ENCODE measurements at regions of chr12 and their contacts with region 1.

Region 1: DNA sequence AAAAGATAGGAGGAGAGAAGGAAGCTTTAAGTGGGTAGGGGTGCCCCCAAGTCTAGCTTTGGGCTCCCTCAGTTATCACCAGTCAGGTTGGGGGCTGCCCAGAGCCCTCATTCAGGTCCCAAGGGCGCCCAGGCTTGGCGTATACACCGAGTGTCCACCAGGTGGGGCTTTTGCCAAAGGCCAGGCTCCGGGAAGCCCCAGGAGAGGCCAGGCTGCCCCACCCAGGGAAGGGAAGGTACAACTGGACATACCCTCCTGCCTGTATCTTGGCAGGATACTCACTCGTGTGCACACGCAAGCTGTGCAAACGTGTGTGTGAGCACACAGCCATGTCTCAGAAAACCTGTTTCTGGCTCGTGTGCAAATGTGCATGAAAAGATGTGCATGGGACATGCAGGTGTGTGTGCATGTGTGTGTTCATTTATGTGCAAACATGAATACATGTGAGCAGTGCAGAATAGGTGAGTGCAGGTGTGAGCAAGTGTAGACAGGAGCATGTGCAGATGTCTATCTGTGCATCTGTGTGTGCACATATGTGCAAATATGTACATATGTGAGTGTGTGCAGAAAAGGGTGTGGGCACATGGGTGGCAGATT is 103.9 kb upstream of the MYL2 start:
- DNase-seq: peak; percentile 72
- ATAC-seq: peak; percentile 83
- H3K4me3 Mint-ChIP-seq: no peak overlapping the region
- H3K27ac Mint-ChIP-seq: no peak overlapping the region
- H3K4me1 Mint-ChIP-seq: no peaks in the 10 kb centered on the region
- H3K27me3 Mint-ChIP-seq: peaks cover 14% of the 10 kb centered on the region

Region 2: DNA sequence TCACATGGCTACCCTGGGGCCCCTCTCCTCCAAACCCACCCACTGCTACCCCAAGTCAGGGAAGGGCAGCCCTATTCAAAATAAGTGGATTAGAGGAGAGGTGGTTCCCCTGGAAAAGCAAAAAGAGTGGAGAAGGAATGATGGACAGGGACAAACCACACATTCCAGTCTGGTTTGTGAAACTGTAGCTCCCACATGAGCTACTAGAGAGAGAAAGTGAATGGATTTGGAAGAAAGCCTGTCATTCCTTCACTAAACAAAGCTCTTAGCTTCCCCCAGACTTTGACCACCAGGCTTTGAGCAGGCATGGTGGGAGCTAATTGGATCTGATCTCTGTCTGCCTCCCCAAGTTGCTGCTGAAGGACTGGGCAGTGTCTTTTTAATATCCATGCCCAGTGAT is 149.5 kb before region 1 on chr12:
- CTCF ChIA-PET with region 1: no interaction called
- POLR2A ChIA-PET with region 1: no interaction called
- intact Hi-C with region 1: no loop called
- DNase-seq: no peak
- ATAC-seq: no peak
- H3K4me3 Mint-ChIP-seq: no peak overlapping the region
- H3K27ac Mint-ChIP-seq: no peak overlapping the region
- H3K4me1 Mint-ChIP-seq: no peaks in the 10 kb centered on the region
- H3K27me3 Mint-ChIP-seq: peaks cover 4% of the 10 kb centered on the region

Region 3: DNA sequence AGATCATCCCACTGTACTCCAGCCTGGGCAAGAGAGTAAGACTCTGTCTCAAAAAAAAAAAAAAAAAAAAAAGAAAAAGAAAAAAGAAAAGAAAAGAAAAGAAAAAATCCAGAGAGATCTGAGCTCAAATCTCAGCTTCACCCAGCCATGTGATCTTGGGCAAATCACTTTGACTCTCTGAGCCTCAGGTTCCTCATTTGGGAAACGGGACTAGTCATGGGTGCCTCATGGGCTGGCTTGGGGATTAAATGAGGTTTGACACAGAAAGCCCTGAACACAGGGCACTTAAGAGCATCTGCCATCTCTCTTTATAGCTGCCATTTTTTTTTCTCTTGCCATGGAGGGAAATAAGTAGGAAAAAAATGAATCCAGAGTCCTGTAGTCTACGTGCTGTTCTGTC is 17.7 kb before region 1 on chr12:
- CTCF ChIA-PET with region 1: no interaction called
- POLR2A ChIA-PET with region 1: no interaction called
- intact Hi-C with region 1: no loop called
- DNase-seq: no peak
- ATAC-seq: no peak
- H3K4me3 Mint-ChIP-seq: no peak overlapping the region
- H3K27ac Mint-ChIP-seq: no peak overlapping the region
- H3K4me1 Mint-ChIP-seq: no peaks in the 10 kb centered on the region
- H3K27me3 Mint-ChIP-seq: peaks cover 27% of the 10 kb centered on the region

Region 4: GRCh38 chr12:111174251-111174960 is 150.1 kb after region 1 on chr12:
- CTCF ChIA-PET with region 1: no interaction called
- POLR2A ChIA-PET with region 1: no interaction called
- intact Hi-C with region 1: loop called (anchors 1 to 5 kb)
- DNase-seq: peak; percentile 9
- ATAC-seq: no peak
- H3K4me3 Mint-ChIP-seq: no peak overlapping the region
- H3K27ac Mint-ChIP-seq: no peak overlapping the region
- H3K4me1 Mint-ChIP-seq: no peaks in the 10 kb centered on the region
- H3K27me3 Mint-ChIP-seq: peaks cover 12% of the 10 kb centered on the region

Region 5: DNA sequence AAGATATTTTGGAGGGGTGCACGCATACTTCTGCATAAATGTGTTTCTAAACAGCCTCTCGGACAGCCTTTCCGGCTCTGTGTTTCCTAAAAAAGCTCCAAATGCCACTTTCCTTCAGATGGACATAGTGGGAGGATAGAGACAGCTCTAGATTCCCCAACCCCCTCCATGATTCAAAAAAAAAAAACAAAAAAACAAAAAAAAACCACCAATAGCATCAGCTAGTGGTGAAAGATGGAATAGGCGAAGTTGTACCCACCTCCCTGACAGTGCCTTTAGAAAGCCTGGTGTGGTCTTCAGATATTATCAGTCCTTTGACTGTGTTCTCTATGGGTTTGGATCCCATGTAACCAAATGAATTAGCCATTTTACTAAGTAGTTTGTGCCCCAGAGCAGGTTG is 250.5 kb after region 1 on chr12:
- CTCF ChIA-PET with region 1: interaction called, 3 read pairs
- POLR2A ChIA-PET with region 1: no interaction called
- intact Hi-C with region 1: loop called (anchors 5 to 10 kb)
- DNase-seq: no peak
- ATAC-seq: no peak
- H3K4me3 Mint-ChIP-seq: no peak overlapping the region
- H3K27ac Mint-ChIP-seq: no peak overlapping the region
- H3K4me1 Mint-ChIP-seq: no peaks in the 10 kb centered on the region
- H3K27me3 Mint-ChIP-seq: peaks cover 8% of the 10 kb centered on the region

Region 6: GRCh38 chr12:111298582-111299436 is 274.5 kb after region 1 on chr12:
- CTCF ChIA-PET with region 1: interaction called, 4 read pairs
- POLR2A ChIA-PET with region 1: no interaction called
- intact Hi-C with region 1: loop called in 1 of 2 experiments (anchors 1 kb)
- DNase-seq: peak; percentile 76
- ATAC-seq: peak; percentile 60
- H3K4me3 Mint-ChIP-seq: no peak overlapping the region
- H3K27ac Mint-ChIP-seq: no peak overlapping the region
- H3K4me1 Mint-ChIP-seq: no peaks in the 10 kb centered on the region
- H3K27me3 Mint-ChIP-seq: no peaks in the 10 kb centered on the region

Region 7: GRCh38 chr12:111313833-111314259 is 289.5 kb after region 1 on chr12:
- CTCF ChIA-PET with region 1: interaction called, 3 read pairs
- POLR2A ChIA-PET with region 1: no interaction called
- intact Hi-C with region 1: loop called (anchors 1 kb)
- DNase-seq: peak; percentile 85
- ATAC-seq: peak; percentile 77
- H3K4me3 Mint-ChIP-seq: no peak overlapping the region
- H3K27ac Mint-ChIP-seq: no peak overlapping the region
- H3K4me1 Mint-ChIP-seq: peaks cover 9% of the 10 kb centered on the region
- H3K27me3 Mint-ChIP-seq: peaks cover 4% of the 10 kb centered on the region

Measured in activated CD4-positive, alpha-beta T cell treated with anti-CD3 and anti-CD28 coated beads for 36 hours (primary cell).